ENCODE measurements at regions of chr2 and their contacts with region 1.

Region 1: GRCh38 chr2:96509114-96509846 is 4.1 kb upstream of the NEURL3 start:
- DNase-seq: peak; percentile 87 to 94
- ATAC-seq: peak; percentile 91 to 97 (median 94)
- H3K4me3 ChIP-seq: peak overlapping the region; percentile 23
- H3K27ac ChIP-seq: peak overlapping the region; percentile 64
- H3K4me1 ChIP-seq: peaks cover 39% of the 10 kb centered on the region
- H3K27me3 ChIP-seq: no peaks in the 10 kb centered on the region
- CTCF ChIP-seq: peak; percentile 99

Region 2: DNA sequence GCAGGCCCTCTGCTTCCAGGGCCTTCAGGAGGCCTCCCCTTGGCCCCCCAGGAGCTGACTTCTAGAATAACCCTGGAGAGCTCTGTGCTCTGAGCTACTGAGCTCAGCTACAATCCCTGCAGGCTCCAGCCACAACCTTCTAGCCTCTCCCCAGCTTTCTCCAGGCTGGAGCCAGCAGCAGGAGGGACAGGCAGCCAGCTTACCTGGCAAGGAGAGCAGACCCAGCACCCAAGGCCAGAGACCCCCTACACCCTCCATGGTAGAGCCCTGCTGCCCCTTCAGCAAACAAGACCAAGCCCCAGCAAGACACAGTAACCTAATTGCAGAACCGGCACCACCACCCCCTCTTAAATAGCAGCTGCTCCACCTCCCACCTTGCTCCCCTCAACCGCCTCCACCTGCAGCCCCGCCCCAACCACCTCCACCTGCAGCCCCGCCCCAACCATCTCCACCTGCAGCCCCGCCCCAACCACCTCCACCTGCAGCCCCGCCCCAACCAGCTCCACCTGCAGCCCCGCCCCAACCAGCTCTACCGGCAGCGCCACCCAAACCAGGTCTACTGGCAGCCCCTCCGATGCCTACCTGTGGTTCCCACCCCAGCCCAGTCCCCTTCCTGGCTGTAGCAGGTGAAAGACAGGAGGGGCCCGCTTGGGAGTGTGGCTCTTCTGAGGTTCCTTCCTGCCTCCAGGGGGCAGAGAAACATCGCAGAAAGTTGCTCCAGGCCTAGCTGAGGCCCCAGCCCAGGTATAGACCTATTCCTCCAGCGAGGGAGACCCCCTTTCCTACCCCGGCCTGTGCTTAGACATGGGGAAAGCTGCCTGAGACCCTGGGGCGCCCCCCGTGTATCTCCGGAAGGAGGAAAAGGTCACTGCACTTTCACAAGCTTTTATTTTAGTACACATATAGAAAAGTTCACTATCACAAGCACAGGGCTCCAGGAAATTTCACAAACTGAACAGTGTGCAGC is 370.8 kb before region 1 on chr2 and contains the start of gene ASTL:
- intact Hi-C with region 1: loop called in 1 of 2 experiments (anchors 2 kb)
- DNase-seq: peak in 1 of 2 donors; percentile 60
- ATAC-seq: peak in 3 of 4 donors; percentile 65 to 88 (median 81)
- H3K4me3 ChIP-seq: no peak within 1 kb of the TSS
- H3K27ac ChIP-seq: no peak within 1 kb of the TSS
- H3K4me1 ChIP-seq: no peaks in the 10 kb centered on the region
- H3K27me3 ChIP-seq: no peaks in the 10 kb centered on the region
- CTCF ChIP-seq: peak; percentile 51
- total RNA-seq, gene ASTL: not detected

Region 3: GRCh38 chr2:96305091-96305978 is 203.9 kb before region 1 on chr2 and contains the start of gene SNRNP200:
- intact Hi-C with region 1: loop called (anchors 2 to 10 kb)
- DNase-seq: peak; percentile 89 to 94
- ATAC-seq: peak; percentile 99 to 100 (median 100)
- H3K4me3 ChIP-seq: peak within 1 kb of the TSS; percentile 91
- H3K27ac ChIP-seq: peak within 1 kb of the TSS; percentile 88
- H3K4me1 ChIP-seq: peaks cover 22% of the 10 kb centered on the region
- H3K27me3 ChIP-seq: no peaks in the 10 kb centered on the region
- CTCF ChIP-seq: no peak
- total RNA-seq, gene SNRNP200: 61.1 to 83.1 (median 77.6) TPM

Region 4: DNA sequence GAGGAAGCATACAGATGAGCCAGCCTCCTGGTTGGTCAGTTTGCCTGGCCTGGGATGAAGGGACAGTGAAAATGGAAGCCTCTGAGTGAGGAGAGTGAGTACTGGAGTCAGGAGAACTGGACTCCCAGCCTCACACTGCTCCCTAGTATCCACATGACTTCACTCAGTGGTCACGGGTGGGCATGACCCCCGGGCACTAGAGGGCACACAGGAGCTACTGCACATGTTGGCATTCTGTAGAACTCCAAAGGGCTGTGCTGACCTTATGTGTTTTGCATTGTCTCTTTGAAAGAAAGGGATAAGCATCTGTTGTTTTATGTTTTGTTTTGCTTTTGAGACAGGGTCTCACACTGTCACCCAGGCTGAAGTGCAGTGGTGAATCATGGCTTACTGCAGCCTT is 150.0 kb before region 1 on chr2:
- intact Hi-C with region 1: loop called in 1 of 2 experiments (anchors 2 kb)
- DNase-seq: peak in 1 of 2 donors; percentile 25
- ATAC-seq: peak in 2 of 4 donors; percentile 56 to 64
- H3K4me3 ChIP-seq: no peak overlapping the region
- H3K27ac ChIP-seq: no peak overlapping the region
- H3K4me1 ChIP-seq: no peaks in the 10 kb centered on the region
- H3K27me3 ChIP-seq: no peaks in the 10 kb centered on the region
- CTCF ChIP-seq: peak; percentile 24

Region 5: GRCh38 chr2:96407041-96407918 is 102.0 kb before region 1 on chr2:
- intact Hi-C with region 1: loop called (anchors 1 kb)
- DNase-seq: peak; percentile 42 to 73
- ATAC-seq: peak; percentile 66 to 88 (median 78)
- H3K4me3 ChIP-seq: no peak overlapping the region
- H3K27ac ChIP-seq: no peak overlapping the region
- H3K4me1 ChIP-seq: peaks cover 17% of the 10 kb centered on the region
- H3K27me3 ChIP-seq: no peaks in the 10 kb centered on the region
- CTCF ChIP-seq: peak; percentile 82

Region 6: GRCh38 chr2:96470636-96471035 is 38.6 kb before region 1 on chr2:
- intact Hi-C with region 1: loop called in 1 of 2 experiments (anchors 1 kb)
- DNase-seq: peak; percentile 42 to 61
- ATAC-seq: peak; percentile 68 to 77 (median 72)
- H3K4me3 ChIP-seq: peak overlapping the region; percentile 53
- H3K27ac ChIP-seq: no peak overlapping the region
- H3K4me1 ChIP-seq: no peaks in the 10 kb centered on the region
- H3K27me3 ChIP-seq: peaks cover 0 to 6% (median 0%) of the 10 kb centered on the region in 3 donors
- CTCF ChIP-seq: peak; percentile 53

Region 7: GRCh38 chr2:96554293-96555145 is 45.2 kb after region 1 on chr2:
- intact Hi-C with region 1: no loop called
- DNase-seq: peak; percentile 74 to 91
- ATAC-seq: peak; percentile 56 to 82 (median 74)
- H3K4me3 ChIP-seq: peak overlapping the region; percentile 55
- H3K27ac ChIP-seq: peak overlapping the region; percentile 91
- H3K4me1 ChIP-seq: peaks cover 17% of the 10 kb centered on the region
- H3K27me3 ChIP-seq: no peaks in the 10 kb centered on the region
- CTCF ChIP-seq: peak; percentile 97

Region 8: GRCh38 chr2:96602330-96602823 is 93.1 kb after region 1 on chr2:
- intact Hi-C with region 1: no loop called
- DNase-seq: no peak
- ATAC-seq: peak in 1 of 4 donors; percentile 15
- H3K4me3 ChIP-seq: no peak overlapping the region
- H3K27ac ChIP-seq: peak overlapping the region; percentile 92
- H3K4me1 ChIP-seq: peaks cover 47% of the 10 kb centered on the region
- H3K27me3 ChIP-seq: no peaks in the 10 kb centered on the region
- CTCF ChIP-seq: no peak

Measured in psoas muscle (tissue), 8 donors.